ENCODE measurements at regions of chr14 and their contacts with region 1.

Region 1: DNA sequence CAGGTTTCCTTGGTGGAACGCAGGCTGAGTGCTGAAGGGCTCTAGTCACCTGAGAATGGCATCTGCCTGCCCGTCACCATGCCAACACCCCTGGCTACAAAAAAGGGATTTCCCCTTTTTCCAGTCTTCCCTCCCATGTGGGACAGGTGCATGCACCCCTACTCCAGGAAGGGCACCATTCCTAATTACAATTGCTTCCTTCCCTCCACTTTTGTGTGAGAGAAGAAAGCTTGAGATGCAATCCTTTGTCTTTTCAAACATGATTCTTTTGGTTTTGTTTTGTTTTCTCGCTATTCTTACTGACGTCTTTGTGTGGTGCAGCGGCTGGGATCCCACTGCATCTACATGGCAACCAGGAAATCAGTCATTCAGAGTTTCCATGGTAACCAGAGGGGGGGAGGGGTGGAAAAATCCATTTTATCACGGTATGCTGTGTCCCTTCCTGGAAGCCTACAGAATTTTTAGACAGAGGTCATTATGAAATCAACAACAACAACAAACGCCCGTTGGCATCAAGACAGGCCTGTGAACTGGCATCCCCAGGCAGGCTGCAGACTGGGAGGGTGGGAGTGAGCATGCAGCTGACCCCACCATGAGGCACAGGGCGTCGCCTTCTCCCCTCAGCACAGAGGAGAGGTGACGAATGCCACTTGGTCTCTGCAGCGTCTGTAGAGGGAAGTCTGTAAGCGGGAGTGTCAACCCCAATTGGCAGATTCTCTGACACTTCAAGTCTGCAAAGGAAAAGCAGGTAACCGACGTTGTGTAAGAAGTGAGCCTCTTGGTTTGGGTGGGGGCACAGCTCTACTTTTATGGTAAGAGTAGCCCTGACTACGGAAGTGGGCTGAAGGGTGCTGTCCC is 13.6 kb upstream of the GNG2 start:
- DNase-seq: peak; percentile 93
- H3K4me3 Mint-ChIP-seq: peak overlapping the region; percentile 68
- H3K27ac Mint-ChIP-seq: peak overlapping the region; percentile 98
- H3K4me1 Mint-ChIP-seq: peaks cover 64% of the 10 kb centered on the region
- H3K27me3 Mint-ChIP-seq: no peaks in the 10 kb centered on the region

Region 2: DNA sequence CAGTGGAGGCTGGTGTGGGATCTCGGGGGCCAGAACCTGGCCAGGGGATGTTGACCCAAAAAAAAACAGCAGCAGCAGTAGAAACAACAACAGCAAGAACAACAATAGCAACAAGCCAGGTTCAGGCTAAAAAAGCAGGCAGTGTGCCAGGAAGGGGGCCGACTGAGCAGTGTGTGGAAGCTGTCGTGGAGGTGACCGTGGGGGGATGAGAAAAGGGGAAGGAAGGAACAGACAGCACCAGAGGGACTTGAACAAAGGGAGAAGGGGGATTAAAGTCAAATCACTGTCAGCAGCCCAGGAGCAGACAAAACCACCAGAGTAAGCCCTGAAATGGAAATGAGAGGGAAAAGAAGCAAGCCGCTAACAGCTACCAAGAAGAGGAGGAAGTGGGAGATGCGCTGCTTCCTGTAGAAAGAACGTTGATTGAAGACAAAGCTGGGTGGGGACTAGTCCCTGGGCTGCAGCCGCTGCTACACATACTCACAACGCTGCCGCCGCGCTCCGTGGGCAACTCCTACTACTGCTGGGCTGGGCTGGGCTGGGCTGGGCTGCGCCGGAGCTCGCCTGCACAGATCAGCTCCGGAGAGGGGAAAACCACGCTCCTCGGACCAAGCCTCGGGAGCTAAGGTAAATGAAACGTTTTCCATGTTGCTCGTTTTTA is 13.4 kb after region 1 on chr14 and contains the start of gene GNG2:
- CTCF ChIA-PET with region 1: interaction called, 17 read pairs
- DNase-seq: peak; percentile 91
- H3K4me3 Mint-ChIP-seq: peak within 1 kb of the TSS; percentile 83
- H3K27ac Mint-ChIP-seq: peak within 1 kb of the TSS; percentile 93
- H3K4me1 Mint-ChIP-seq: peaks cover 57% of the 10 kb centered on the region
- H3K27me3 Mint-ChIP-seq: no peaks in the 10 kb centered on the region

Region 3: DNA sequence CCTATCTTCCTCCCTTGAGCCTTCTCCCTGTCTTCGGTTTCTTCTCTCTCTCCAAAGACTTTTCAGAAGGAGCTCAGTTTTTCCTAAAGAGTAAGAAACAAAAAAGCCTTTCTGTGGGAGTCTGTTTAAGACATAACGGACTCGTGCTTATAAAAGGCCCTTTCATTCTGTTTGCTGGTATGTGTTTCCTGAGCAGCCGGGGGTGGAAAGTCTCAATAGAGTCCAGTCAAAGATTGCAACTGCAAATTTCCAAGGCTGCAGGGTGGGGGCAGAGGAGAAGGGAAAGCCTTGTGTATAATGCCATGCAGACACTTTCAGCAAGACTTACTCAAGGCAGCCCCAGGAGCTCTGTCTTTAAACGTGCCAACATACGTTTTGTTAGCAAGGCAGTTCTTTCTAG is 75.8 kb after region 1 on chr14:
- CTCF ChIA-PET with region 1: no interaction called
- DNase-seq: no peak
- H3K4me3 Mint-ChIP-seq: no peak overlapping the region
- H3K27ac Mint-ChIP-seq: no peak overlapping the region
- H3K4me1 Mint-ChIP-seq: peaks cover 25% of the 10 kb centered on the region
- H3K27me3 Mint-ChIP-seq: no peaks in the 10 kb centered on the region

Measured in activated naive CD4-positive, alpha-beta T cell treated with anti-CD3 and anti-CD28 coated beads, Interleukin-2, amount 10 ng/mL, durations not matched to agents 7 days and 5 days (primary cell).